Activated T-helper 1 cell treated with anti-CD3 and anti-CD28 coated beads, Interleukin-12 subunit alpha, Interleukin-12 subunit beta, Interleukin-2, Interleukin-4 antibody, amounts not matched to agents 30 ng/mL and 10 ng/mL and 1 ng/mL, durations not matched to agents 14 hours and 24 hours and 36 hours (primary cell): ENCODE measurements at regions of chr2 and their contacts with region 1.

Region 1: DNA sequence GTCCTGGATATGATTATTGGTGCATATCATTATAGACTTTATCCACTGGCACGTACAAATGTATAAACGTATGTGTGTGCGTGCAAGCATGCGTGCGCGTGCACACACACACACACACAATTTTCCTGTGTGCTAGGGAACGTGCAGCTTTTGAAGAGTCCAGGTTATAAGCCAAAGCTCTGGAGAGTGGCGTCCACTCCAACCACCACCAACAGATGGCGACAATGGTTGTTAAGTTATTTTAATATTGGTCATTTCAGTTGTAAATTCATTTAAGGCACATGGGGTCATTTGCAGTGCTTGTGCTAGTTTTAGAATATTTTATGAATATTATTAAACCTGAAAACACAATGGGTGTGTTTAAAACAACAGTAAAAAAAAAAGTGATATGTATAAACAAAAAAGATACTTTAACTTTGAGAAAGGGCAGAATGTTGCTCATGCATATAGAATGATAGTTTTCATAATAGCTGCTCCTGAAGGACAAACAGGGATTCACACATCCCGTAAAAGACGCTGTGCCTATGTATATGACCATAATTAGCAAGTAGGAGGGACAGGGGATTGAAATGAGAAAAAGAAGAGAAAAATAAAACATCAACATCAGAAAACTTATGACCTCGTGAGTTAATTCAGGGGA is 124.2 kb upstream of the ITGB6 start:
- DNase-seq: no peak
- H3K4me3 Mint-ChIP-seq: no peak overlapping the region
- H3K27ac Mint-ChIP-seq: peak overlapping the region; percentile 35
- H3K4me1 Mint-ChIP-seq: peaks cover 65% of the 10 kb centered on the region
- H3K27me3 Mint-ChIP-seq: peaks cover 6% of the 10 kb centered on the region

Region 2: GRCh38 chr2:159946326-159946999 is 377.8 kb before region 1 on chr2:
- intact Hi-C with region 1: no loop called
- DNase-seq: no peak
- H3K4me3 Mint-ChIP-seq: no peak overlapping the region
- H3K27ac Mint-ChIP-seq: no peak overlapping the region
- H3K4me1 Mint-ChIP-seq: no peaks in the 10 kb centered on the region
- H3K27me3 Mint-ChIP-seq: no peaks in the 10 kb centered on the region

Region 3: GRCh38 chr2:160109936-160110673 is 214.2 kb before region 1 on chr2:
- intact Hi-C with region 1: loop called (anchors 5 kb)
- DNase-seq: peak; percentile 21
- H3K4me3 Mint-ChIP-seq: no peak overlapping the region
- H3K27ac Mint-ChIP-seq: no peak overlapping the region
- H3K4me1 Mint-ChIP-seq: no peaks in the 10 kb centered on the region
- H3K27me3 Mint-ChIP-seq: peaks cover 4% of the 10 kb centered on the region

Region 4: DNA sequence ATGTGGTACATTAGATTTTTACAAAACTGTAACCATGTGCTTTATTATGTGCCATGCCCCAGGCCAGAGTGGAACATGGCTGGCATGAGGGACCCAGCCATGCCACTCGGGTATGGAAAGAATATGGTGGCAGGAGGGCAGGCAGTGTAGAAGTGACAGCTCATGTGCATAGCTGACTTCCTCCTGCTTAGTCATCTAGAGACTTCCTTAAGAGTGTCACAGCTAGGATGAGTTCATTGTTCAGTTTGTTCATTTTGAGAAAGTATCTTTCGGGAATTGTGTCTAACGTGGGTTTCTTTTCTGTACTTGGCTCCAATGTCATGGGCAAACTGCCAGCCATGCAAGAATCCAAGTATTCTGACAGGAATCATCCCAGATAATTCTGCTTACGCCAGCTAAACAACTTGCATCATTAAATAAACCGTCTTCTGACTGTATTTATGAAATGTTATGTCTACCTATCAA is 29.9 kb before region 1 on chr2:
- intact Hi-C with region 1: loop called (anchors 1 kb)
- DNase-seq: no peak
- H3K4me3 Mint-ChIP-seq: no peak overlapping the region
- H3K27ac Mint-ChIP-seq: peak overlapping the region; percentile 1
- H3K4me1 Mint-ChIP-seq: peaks cover 72% of the 10 kb centered on the region
- H3K27me3 Mint-ChIP-seq: no peaks in the 10 kb centered on the region

Region 5: GRCh38 chr2:160367887-160368286 is 43.6 kb after region 1 on chr2:
- intact Hi-C with region 1: no loop called
- DNase-seq: no peak
- H3K4me3 Mint-ChIP-seq: no peak overlapping the region
- H3K27ac Mint-ChIP-seq: no peak overlapping the region
- H3K4me1 Mint-ChIP-seq: peaks cover 46% of the 10 kb centered on the region
- H3K27me3 Mint-ChIP-seq: no peaks in the 10 kb centered on the region

Region 6: DNA sequence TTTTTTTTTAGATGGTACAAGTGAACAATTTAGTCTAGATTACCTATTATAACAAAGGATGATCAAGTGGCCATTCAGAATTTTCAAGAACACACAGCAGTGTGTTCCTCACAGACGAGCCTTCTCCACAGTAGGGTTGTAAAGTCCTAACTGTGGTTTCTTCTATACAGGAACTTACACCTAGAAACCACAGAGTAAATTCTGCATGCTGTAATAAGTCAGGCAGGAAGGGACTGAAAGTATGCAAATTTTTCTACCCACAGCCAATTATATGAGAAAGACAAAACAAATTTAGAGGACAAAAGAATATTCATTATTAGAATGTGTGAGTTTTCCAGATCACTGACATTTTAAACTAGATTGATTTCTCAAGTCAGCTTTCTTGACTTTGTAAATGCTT is 69.9 kb after region 1 on chr2:
- intact Hi-C with region 1: loop called (anchors 2 kb)
- DNase-seq: no peak
- H3K4me3 Mint-ChIP-seq: peak overlapping the region; percentile 61
- H3K27ac Mint-ChIP-seq: peak overlapping the region; percentile 46
- H3K4me1 Mint-ChIP-seq: peaks cover 49% of the 10 kb centered on the region
- H3K27me3 Mint-ChIP-seq: no peaks in the 10 kb centered on the region

Region 7: GRCh38 chr2:160411955-160412354 is 87.7 kb after region 1 on chr2:
- intact Hi-C with region 1: no loop called
- DNase-seq: no peak
- H3K4me3 Mint-ChIP-seq: peak overlapping the region; percentile 70
- H3K27ac Mint-ChIP-seq: peak overlapping the region; percentile 65
- H3K4me1 Mint-ChIP-seq: peaks cover 62% of the 10 kb centered on the region
- H3K27me3 Mint-ChIP-seq: no peaks in the 10 kb centered on the region

Region 8: DNA sequence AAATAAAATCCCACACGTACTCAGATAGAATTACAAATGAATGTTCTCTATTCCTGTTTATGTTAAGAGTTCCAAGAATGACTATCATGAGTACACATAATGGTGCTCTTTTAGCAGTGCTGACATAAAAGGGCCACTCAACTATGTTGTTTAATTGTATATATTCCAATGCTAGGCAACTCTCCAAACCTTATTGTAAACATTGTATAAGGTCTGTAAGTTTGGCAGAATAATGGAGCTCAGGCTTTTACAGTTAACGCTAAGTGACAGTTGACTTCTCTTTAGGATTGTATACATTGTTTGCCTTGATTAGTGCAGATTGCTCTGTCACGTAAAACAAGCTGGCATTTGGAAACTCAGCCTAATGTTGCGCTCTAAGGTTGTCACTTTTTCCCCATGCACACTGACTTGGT is 148.6 kb after region 1 on chr2:
- intact Hi-C with region 1: loop called (anchors 2 kb)
- DNase-seq: no peak
- H3K4me3 Mint-ChIP-seq: peak overlapping the region; percentile 49
- H3K27ac Mint-ChIP-seq: peak overlapping the region; percentile 59
- H3K4me1 Mint-ChIP-seq: peaks cover 67% of the 10 kb centered on the region
- H3K27me3 Mint-ChIP-seq: no peaks in the 10 kb centered on the region

Region 9: DNA sequence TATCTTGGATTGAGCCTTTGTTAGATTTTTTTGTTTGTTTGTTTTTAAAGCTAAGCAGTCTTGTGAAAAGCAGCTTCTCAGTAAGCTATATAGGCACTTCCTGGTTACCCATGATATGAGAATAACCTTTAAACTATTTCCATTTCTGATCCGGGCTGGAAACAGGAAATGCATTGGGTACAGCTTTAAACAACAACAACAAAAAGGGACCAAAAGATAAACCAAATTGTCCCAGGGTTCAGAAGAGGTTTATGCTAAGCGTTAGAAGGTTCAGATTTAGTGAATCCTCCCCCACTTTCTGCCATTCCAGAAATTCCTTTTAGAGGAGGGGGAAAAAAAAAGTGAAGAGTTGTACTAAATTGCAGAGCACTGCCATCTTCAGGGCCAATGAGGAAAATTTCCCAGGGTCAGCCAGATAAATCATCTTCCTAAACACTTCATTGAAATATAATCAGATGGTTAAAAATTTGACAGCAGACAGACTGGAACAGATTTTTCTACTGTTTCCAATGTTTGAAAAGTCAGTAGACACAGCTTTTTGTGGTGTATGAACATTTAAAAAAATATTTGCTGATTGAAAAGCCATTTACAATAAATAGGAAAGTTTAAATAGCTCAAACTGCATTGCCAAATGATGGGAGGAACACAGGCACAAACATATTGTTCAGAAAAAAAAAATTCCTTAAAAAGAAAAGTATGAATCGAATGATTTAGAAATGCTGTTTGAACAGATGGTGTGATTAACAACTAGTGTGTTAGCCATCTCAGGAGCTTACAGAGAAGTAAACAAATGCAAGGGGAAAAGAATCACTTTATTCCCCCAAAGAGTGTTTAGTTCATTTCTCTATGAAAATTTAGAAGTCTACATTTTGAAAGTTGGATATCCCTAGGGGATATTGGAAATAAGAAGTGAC is 646.0 kb after region 1 on chr2:
- intact Hi-C with region 1: loop called (anchors 5 kb)
- DNase-seq: no peak
- H3K4me3 Mint-ChIP-seq: no peak overlapping the region
- H3K27ac Mint-ChIP-seq: no peak overlapping the region
- H3K4me1 Mint-ChIP-seq: no peaks in the 10 kb centered on the region
- H3K27me3 Mint-ChIP-seq: peaks cover 15% of the 10 kb centered on the region